HCT116 (cell line): ENCODE measurements at regions of chr20 and their contacts with region 1.

Region 1: GRCh38 chr20:25065625-25066338 is 7.8 kb upstream of the ACSS1 start:
- DNase-seq: peak; percentile 31
- ATAC-seq: peak; percentile 82
- H3K4me3 ChIP-seq: no peak overlapping the region
- H3K27ac ChIP-seq: no peak overlapping the region
- H3K4me1 ChIP-seq: no peaks in the 10 kb centered on the region
- H3K27me3 ChIP-seq: peaks cover 64% of the 10 kb centered on the region
- CTCF ChIP-seq: peak; percentile 61 to 75 (median 74)
- POLR2A ChIP-seq: no peak
- RAD21 ChIP-seq: peak; percentile 80

Region 2: GRCh38 chr20:25390538-25391528 is 325.1 kb after region 1 on chr20 and contains the start of gene ABHD12:
- CTCF ChIA-PET with region 1: no interaction called
- POLR2A ChIA-PET with region 1: no interaction called
- RAD21 ChIA-PET with region 1: no interaction called
- intact Hi-C with region 1: loop called (anchors 10 kb)
- DNase-seq: peak; percentile 81
- ATAC-seq: peak; percentile 89
- H3K4me3 ChIP-seq: peak within 1 kb of the TSS; percentile 81 to 96
- H3K27ac ChIP-seq: peak within 1 kb of the TSS; percentile 96
- H3K4me1 ChIP-seq: peaks cover 9 to 13% of the 10 kb centered on the region in 2 experiments; a peak in 3 of 4 replicates
- H3K27me3 ChIP-seq: no peaks in the 10 kb centered on the region
- CTCF ChIP-seq: no peak
- POLR2A ChIP-seq: peak; percentile 43
- RAD21 ChIP-seq: 0 out of 2 replicates have a peak, but pooled peaks have one; percentile 19
- total RNA-seq, gene ABHD12: 31.7 TPM